B cell (primary cell): ENCODE measurements at regions of chr3 and their contacts with region 1.

Region 1: GRCh38 chr3:87167628-87168456 is 59.3 kb upstream of the CHMP2B start:
- DNase-seq: peak; percentile 47
- ATAC-seq: peak; percentile 33
- H3K4me3 ChIP-seq: no peak overlapping the region
- H3K4me3 Mint-ChIP-seq: peak overlapping the region; percentile 35
- H3K27ac ChIP-seq: no peak overlapping the region
- H3K27ac Mint-ChIP-seq: no peak overlapping the region
- H3K4me1 ChIP-seq: peaks cover 0 to 2% of the 10 kb centered on the region in 2 donors
- H3K4me1 Mint-ChIP-seq: peaks cover 2% of the 10 kb centered on the region
- H3K27me3 ChIP-seq: no peaks in the 10 kb centered on the region
- H3K27me3 Mint-ChIP-seq: peaks cover 9% of the 10 kb centered on the region
- CTCF ChIP-seq: peak; percentile 85

Region 2: GRCh38 chr3:86702381-86702958 is 465.4 kb before region 1 on chr3:
- CTCF ChIA-PET with region 1: interaction called, 6 read pairs
- POLR2A ChIA-PET with region 1: no interaction called
- intact Hi-C with region 1: loop called (anchors 5 kb)
- DNase-seq: no peak
- ATAC-seq: no peak
- H3K4me3 ChIP-seq: no peak overlapping the region
- H3K4me3 Mint-ChIP-seq: no peak overlapping the region
- H3K27ac ChIP-seq: no peak overlapping the region
- H3K27ac Mint-ChIP-seq: no peak overlapping the region
- H3K4me1 ChIP-seq: no peaks in the 10 kb centered on the region
- H3K4me1 Mint-ChIP-seq: no peaks in the 10 kb centered on the region
- H3K27me3 ChIP-seq: no peaks in the 10 kb centered on the region
- H3K27me3 Mint-ChIP-seq: no peaks in the 10 kb centered on the region
- CTCF ChIP-seq: peak; percentile 66

Region 3: DNA sequence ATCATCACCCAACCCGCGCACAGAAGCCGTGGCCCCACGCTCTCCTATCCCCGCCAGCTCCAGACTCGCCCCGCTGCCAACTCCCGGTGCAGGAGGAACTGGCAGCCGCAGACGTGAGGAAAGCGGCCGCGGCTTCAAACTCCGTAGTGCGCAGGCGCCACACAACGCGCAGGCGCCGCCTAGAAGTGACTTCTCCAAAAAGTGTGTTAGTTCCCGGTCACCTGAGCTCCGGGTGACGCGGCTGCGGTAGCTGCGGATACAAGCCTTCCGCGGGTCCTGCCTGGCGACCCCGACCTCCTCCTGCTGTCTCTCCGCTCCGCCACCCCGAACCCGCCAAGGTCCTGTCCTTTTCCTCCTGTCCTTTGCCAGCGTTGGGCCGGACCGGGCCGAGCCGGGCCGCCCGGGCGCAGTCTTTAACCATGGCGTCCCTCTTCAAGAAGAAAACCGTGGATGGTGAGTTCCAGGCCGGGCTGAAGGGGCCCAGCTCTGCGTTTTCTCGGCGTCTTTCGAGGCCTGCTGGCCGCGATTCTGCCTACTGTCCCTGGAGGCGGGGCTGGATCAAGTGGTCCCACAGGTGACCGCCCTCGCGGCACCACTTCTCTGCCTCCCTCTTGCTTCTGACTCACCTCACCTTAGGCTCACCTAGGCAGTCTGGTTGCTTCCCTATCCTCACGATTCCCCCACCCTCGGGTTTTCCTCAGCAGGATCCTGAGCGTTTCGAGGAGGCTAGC is 59.4 kb after region 1 on chr3 and contains the start of gene CHMP2B:
- CTCF ChIA-PET with region 1: no interaction called
- POLR2A ChIA-PET with region 1: no interaction called
- intact Hi-C with region 1: no loop called
- DNase-seq: peak; percentile 96
- ATAC-seq: peak; percentile 87
- H3K4me3 ChIP-seq: peak within 1 kb of the TSS; percentile 42 to 99 (median 96)
- H3K4me3 Mint-ChIP-seq: peak within 1 kb of the TSS; percentile 97
- H3K27ac ChIP-seq: peak within 1 kb of the TSS; percentile 89 to 98
- H3K27ac Mint-ChIP-seq: peak within 1 kb of the TSS; percentile 97
- H3K4me1 ChIP-seq: peaks cover 13 to 16% of the 10 kb centered on the region in 2 donors
- H3K4me1 Mint-ChIP-seq: peaks cover 53% of the 10 kb centered on the region
- H3K27me3 ChIP-seq: peaks cover 0 to 7% (median 3%) of the 10 kb centered on the region in 4 experiments
- H3K27me3 Mint-ChIP-seq: peaks cover 14% of the 10 kb centered on the region
- CTCF ChIP-seq: no peak
- total RNA-seq, gene CHMP2B: 22.2 and 25.0 TPM in 2 replicates